ENCODE measurements at regions of chr12 and their contacts with region 1.

Region 1: GRCh38 chr12:111685744-111686517 is at the starts of genes ACAD10 and BRAP:
- DNase-seq: peak; percentile 95
- ATAC-seq: peak; percentile 95
- H3K4me3 Mint-ChIP-seq: peak within 1 kb of the TSS; percentile 93
- H3K27ac Mint-ChIP-seq: peak within 1 kb of the TSS; percentile 95
- H3K4me1 Mint-ChIP-seq: peaks cover 41% of the 10 kb centered on the region
- H3K27me3 Mint-ChIP-seq: no peaks in the 10 kb centered on the region
- CTCF ChIP-seq: no peak
- total RNA-seq, gene ACAD10: 33.3 and 45.1 TPM in 2 replicates
- total RNA-seq, gene BRAP: 24.1 and 24.2 TPM in 2 replicates

Region 2: DNA sequence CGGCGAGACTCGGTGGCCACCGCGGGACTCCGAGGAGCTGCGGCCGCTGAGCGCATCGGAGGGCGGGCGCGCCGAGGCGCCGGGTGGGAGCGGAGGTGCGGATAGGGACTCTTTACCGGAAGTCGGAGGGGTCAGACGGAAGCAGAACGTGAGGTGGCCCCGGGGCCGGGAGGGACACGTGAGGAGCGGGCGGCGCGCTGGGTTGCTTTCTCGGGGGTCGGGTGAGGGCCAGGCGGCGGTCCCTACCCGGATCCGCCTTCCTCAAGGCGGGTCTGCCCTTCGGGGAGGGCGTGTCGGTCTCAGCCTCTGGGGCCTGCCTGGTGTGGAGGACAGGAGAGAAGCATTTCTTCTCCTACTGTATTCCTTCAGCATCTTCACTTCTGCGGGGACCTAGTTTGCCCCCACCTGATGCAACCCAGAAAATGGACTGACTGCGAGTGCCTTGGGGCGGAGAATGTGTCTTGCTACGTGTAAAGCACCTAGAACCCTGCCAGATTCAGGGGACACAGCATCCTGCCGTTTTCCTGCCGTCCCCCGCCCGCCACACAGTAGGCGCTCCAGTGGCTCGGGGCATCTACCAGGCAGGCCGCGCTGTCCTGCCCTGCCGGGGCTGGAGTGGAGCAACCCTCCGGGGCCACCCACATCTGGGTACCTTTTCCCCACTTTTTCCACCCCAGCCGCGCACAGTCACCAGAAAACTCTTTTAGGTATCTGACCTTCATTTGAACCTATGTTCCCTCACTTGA is 86.3 kb before region 1 on chr12:
- CTCF ChIA-PET with region 1: no interaction called
- POLR2A ChIA-PET with region 1: interaction called, 7 read pairs
- intact Hi-C with region 1: loop called (anchors 2 kb)
- DNase-seq: peak; percentile 93
- ATAC-seq: peak; percentile 81
- H3K4me3 Mint-ChIP-seq: peak overlapping the region; percentile 86
- H3K27ac Mint-ChIP-seq: peak overlapping the region; percentile 88
- H3K4me1 Mint-ChIP-seq: peaks cover 29% of the 10 kb centered on the region
- H3K27me3 Mint-ChIP-seq: no peaks in the 10 kb centered on the region
- CTCF ChIP-seq: no peak

Region 3: DNA sequence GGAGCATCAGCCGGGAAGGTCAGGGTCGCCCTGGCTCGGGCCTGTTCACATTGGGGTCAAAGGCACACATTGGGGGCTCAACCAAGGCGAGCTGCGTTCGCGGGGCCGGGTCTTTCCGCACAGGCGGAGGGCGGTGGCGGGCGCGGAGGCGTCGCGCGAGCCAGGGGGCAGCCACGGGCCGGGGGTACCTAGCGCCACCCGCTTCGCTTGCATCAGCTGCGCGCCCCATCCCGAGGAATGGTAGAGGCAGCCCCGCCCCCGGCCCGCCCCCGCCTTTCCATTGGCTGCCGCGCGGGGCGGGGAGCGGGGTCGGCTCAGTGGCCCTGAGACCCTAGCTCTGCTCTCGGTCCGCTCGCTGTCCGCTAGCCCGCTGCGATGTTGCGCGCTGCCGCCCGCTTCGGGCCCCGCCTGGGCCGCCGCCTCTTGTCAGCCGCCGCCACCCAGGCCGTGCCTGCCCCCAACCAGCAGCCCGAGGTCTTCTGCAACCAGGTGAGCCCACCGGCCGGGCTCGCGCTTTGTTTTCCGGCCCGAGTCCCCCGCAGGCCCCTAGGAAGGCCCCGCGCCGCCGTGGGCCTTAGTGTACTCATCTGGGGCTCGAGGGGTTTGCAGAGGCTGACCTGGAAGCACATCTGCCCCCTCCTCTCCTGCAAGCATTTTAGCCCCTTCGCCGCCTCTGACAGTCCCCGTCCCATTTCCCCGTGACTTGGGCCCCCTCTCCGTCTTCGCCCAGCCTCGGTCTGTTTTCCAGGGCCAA is 80.9 kb after region 1 on chr12 and contains the start of gene ALDH2:
- CTCF ChIA-PET with region 1: no interaction called
- POLR2A ChIA-PET with region 1: interaction called, 6 read pairs
- intact Hi-C with region 1: loop called (anchors 10 kb)
- DNase-seq: peak; percentile 60
- ATAC-seq: peak; percentile 68
- H3K4me3 Mint-ChIP-seq: peak within 1 kb of the TSS; percentile 87
- H3K27ac Mint-ChIP-seq: peak within 1 kb of the TSS; percentile 88
- H3K4me1 Mint-ChIP-seq: peaks cover 55% of the 10 kb centered on the region
- H3K27me3 Mint-ChIP-seq: no peaks in the 10 kb centered on the region
- CTCF ChIP-seq: no peak
- total RNA-seq, gene ALDH2: 36.0 and 37.4 TPM in 2 replicates

Region 4: DNA sequence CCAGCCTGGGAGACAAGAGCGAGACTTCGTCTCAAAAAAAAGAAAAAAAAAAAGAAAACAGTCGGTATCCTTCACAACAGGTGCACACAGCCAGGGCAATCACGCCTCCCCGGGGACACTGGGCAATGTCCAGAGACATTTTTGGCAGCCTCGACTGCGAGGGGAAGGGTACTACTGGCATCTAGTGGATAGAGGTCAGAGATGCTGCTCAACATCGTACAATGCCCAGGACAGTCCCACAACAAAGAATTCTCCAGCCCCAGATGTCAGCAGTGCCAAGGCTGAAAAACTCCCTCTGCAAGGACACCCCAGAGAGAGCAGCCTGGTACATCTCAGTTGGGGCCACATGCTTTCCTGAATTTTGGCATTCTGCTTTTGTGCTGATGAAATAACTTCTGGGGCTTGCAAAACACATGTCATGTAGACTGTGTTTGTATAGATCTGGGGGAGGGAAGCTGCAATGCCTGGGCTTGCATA is 102.3 kb after region 1 on chr12:
- CTCF ChIA-PET with region 1: no interaction called
- POLR2A ChIA-PET with region 1: interaction called, 4 read pairs
- intact Hi-C with region 1: loop called (anchors 2 kb)
- DNase-seq: no peak
- ATAC-seq: no peak
- H3K4me3 Mint-ChIP-seq: no peak overlapping the region
- H3K27ac Mint-ChIP-seq: no peak overlapping the region
- H3K4me1 Mint-ChIP-seq: no peaks in the 10 kb centered on the region
- H3K27me3 Mint-ChIP-seq: no peaks in the 10 kb centered on the region
- CTCF ChIP-seq: no peak

Region 5: GRCh38 chr12:111799758-111800157 is 113.8 kb after region 1 on chr12:
- CTCF ChIA-PET with region 1: no interaction called
- POLR2A ChIA-PET with region 1: no interaction called
- intact Hi-C with region 1: no loop called
- DNase-seq: no peak
- ATAC-seq: no peak
- H3K4me3 Mint-ChIP-seq: no peak overlapping the region
- H3K27ac Mint-ChIP-seq: no peak overlapping the region
- H3K4me1 Mint-ChIP-seq: no peaks in the 10 kb centered on the region
- H3K27me3 Mint-ChIP-seq: no peaks in the 10 kb centered on the region
- CTCF ChIP-seq: no peak

Region 6: GRCh38 chr12:111812881-111813741 is 127.2 kb after region 1 on chr12:
- CTCF ChIA-PET with region 1: interaction called, 4 read pairs
- POLR2A ChIA-PET with region 1: interaction called, 9 read pairs
- intact Hi-C with region 1: loop called (anchors 1 kb)
- DNase-seq: peak; percentile 43
- ATAC-seq: peak; percentile 99
- H3K4me3 Mint-ChIP-seq: no peak overlapping the region
- H3K27ac Mint-ChIP-seq: no peak overlapping the region
- H3K4me1 Mint-ChIP-seq: peaks cover 5% of the 10 kb centered on the region
- H3K27me3 Mint-ChIP-seq: no peaks in the 10 kb centered on the region
- CTCF ChIP-seq: peak; percentile 77

Region 7: GRCh38 chr12:111841750-111842555 is 156.0 kb after region 1 on chr12 and contains the start of gene MAPKAPK5:
- CTCF ChIA-PET with region 1: no interaction called
- POLR2A ChIA-PET with region 1: interaction called, 20 read pairs
- intact Hi-C with region 1: loop called (anchors 2 kb)
- DNase-seq: peak; percentile 98
- ATAC-seq: peak; percentile 90
- H3K4me3 Mint-ChIP-seq: peak within 1 kb of the TSS; percentile 95
- H3K27ac Mint-ChIP-seq: peak within 1 kb of the TSS; percentile 97
- H3K4me1 Mint-ChIP-seq: peaks cover 45% of the 10 kb centered on the region
- H3K27me3 Mint-ChIP-seq: no peaks in the 10 kb centered on the region
- CTCF ChIP-seq: no peak
- total RNA-seq, gene MAPKAPK5: 51.7 and 61.2 TPM in 2 replicates

Region 8: GRCh38 chr12:111868676-111869588 is 183.0 kb after region 1 on chr12:
- CTCF ChIA-PET with region 1: no interaction called
- POLR2A ChIA-PET with region 1: no interaction called
- intact Hi-C with region 1: no loop called
- DNase-seq: no peak
- ATAC-seq: no peak
- H3K4me3 Mint-ChIP-seq: no peak overlapping the region
- H3K27ac Mint-ChIP-seq: no peak overlapping the region
- H3K4me1 Mint-ChIP-seq: no peaks in the 10 kb centered on the region
- H3K27me3 Mint-ChIP-seq: no peaks in the 10 kb centered on the region
- CTCF ChIP-seq: no peak

Region 9: DNA sequence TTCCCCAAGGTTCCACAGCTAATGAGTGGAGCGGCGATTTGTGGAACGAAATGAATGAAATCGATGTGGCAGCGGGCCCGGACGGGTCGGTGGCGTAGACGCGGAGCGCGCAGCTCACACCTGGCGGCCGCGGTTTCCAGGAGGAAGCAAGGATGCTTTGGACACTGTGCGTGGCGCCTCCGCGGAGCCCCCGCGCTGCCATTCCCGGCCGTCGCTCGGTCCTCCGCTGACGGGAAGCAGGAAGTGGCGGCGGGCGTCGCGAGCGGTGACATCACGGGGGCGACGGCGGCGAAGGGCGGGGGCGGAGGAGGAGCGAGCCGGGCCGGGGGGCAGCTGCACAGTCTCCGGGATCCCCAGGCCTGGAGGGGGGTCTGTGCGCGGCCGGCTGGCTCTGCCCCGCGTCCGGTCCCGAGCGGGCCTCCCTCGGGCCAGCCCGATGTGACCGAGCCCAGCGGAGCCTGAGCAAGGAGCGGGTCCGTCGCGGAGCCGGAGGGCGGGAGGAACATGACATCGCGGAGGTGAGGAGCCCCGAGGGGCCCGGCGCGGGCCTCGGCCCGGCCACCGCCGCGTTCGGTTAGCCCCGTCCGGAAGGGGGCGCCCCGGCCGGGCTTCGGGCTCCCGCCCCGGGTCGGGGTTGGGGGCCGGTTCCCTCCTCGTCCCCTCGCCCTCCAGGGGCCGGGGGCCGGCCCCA is 732.8 kb after region 1 on chr12 and contains the start of gene PTPN11:
- CTCF ChIA-PET with region 1: no interaction called
- POLR2A ChIA-PET with region 1: no interaction called
- intact Hi-C with region 1: loop called (anchors 5 kb)
- DNase-seq: peak; percentile 96
- ATAC-seq: peak; percentile 82
- H3K4me3 Mint-ChIP-seq: peak within 1 kb of the TSS; percentile 96
- H3K27ac Mint-ChIP-seq: peak within 1 kb of the TSS; percentile 94
- H3K4me1 Mint-ChIP-seq: peaks cover 40% of the 10 kb centered on the region
- H3K27me3 Mint-ChIP-seq: no peaks in the 10 kb centered on the region
- CTCF ChIP-seq: no peak
- total RNA-seq, gene PTPN11: 69.2 and 83.1 TPM in 2 replicates